GM18951 (cell line): ENCODE measurements at regions of chr7 and their contacts with region 1.

Region 1: DNA sequence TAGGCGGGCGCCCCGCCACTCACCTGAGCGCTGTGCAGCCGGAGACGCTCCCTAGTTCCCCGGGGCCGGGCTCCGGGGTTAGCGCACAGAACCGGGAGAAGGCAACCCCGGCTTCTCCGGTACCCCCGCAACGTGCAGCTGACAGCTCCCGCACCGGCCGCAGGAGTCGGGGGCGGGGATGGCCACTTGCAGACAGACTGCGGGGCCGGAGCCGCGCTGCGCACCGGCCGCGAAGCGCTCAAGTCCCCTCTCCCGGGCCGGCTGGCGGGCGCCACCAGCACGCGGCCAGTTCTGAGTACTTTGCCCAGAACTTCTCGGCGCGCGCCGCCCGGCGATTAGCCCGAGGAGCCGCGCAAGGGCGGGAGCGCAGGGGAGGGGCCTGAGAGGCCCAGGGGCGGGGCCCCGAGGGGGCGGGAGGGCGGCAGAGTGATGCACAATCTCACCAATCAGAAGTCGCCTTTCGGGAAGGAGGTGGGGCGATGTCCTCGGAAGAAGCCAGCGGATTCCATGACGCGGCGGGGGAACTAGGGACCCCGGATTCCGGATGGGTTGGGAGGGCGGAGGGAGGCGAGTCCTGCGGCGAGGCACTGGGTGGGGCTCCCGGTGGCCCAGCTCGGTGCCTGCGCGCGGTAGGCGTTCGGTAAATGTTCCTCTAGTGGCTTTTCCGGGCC is at the start of gene OSBPL3:
- POLR2A ChIP-seq: peak; percentile 87

Region 2: GRCh38 chr7:24836084-24836483 is 143.9 kb before region 1 on chr7:
- in situ Hi-C with region 1: loop called (anchors 5 kb)
- POLR2A ChIP-seq: no peak

Region 3: DNA sequence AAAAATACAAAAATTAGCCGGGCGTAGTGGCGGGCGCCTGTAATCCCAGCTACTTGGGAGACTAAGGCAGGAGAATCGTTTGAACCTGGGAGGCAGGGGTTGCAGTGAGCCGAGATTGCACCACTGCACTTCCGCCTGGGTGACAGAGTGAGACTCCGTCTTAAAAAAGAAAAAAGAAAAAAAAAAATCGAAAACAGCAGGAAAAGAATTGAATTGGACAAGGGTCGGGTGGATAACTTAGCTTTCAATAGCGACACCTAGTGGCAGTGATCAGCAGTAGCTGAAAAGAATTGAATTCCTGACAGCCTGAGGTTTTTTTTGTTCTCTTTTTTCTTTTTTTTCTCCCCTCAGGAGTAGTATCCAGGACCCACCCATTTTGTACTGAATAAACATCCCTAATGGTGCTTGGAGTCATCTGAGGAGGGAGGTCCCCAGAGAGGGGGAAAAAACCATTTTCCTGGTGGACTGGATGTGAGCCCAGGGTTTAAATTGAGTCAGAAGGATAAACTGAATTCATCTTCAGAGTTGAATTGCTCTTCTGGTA is 90.0 kb after region 1 on chr7:
- in situ Hi-C with region 1: loop called (anchors 10 kb)
- POLR2A ChIP-seq: no peak